Vagina (tissue), 2 donors: ENCODE measurements at regions of chr3 and their contacts with region 1.

Region 1: GRCh38 chr3:46866720-46867549 is 3.7 kb upstream of the MYL3 start:
- DNase-seq: no peak
- H3K4me3 ChIP-seq: no peak overlapping the region
- H3K27ac ChIP-seq: peak overlapping the region; percentile 66
- H3K4me1 ChIP-seq: peaks cover 36% of the 10 kb centered on the region
- H3K27me3 ChIP-seq: no peaks in the 10 kb centered on the region
- CTCF ChIP-seq: peak; percentile 77 to 93 (median 91)
- POLR2A ChIP-seq: no peak

Region 2: DNA sequence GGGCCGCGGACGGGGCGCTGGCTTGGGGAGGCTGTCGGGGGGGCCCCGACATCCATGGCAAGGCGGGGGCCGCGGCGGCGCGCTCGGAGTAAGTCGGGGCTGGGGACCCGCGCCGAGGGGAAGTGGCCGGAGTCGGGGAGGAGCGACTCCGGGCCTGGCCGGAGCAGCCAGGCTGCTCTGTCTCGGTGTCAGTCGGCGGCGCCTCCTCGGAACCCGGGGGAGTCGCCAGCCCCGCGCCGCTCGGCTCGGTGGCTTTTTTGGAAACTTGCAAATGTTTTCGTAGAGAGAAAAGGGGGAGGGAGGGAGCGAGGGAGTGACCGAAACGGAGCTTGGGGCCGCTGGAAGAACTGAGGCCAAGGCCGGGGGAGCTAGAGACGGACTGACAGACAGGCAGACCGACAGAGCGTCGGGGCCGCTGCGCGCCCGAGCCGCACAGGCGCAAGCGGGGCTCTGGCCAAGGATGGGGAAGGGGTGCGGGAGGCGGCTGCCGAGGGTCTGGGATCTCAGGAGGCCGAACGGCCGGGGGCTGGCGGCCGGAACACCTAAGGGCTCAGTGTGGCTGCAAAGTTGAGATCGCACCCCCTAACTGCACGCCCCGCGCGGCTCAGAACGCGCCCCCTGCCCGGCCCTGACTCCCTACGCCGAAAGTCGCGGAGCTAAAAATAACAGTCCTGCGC is 15.6 kb after region 1 on chr3:
- intact Hi-C with region 1: loop called (anchors 2 kb)
- DNase-seq: no peak
- H3K4me3 ChIP-seq: peak overlapping the region; percentile 62 to 71
- H3K27ac ChIP-seq: peak overlapping the region; percentile 89
- H3K4me1 ChIP-seq: peaks cover 58% of the 10 kb centered on the region
- H3K27me3 ChIP-seq: no peaks in the 10 kb centered on the region
- CTCF ChIP-seq: no peak
- POLR2A ChIP-seq: peak in 1 of 2 donors; percentile 27

Region 3: DNA sequence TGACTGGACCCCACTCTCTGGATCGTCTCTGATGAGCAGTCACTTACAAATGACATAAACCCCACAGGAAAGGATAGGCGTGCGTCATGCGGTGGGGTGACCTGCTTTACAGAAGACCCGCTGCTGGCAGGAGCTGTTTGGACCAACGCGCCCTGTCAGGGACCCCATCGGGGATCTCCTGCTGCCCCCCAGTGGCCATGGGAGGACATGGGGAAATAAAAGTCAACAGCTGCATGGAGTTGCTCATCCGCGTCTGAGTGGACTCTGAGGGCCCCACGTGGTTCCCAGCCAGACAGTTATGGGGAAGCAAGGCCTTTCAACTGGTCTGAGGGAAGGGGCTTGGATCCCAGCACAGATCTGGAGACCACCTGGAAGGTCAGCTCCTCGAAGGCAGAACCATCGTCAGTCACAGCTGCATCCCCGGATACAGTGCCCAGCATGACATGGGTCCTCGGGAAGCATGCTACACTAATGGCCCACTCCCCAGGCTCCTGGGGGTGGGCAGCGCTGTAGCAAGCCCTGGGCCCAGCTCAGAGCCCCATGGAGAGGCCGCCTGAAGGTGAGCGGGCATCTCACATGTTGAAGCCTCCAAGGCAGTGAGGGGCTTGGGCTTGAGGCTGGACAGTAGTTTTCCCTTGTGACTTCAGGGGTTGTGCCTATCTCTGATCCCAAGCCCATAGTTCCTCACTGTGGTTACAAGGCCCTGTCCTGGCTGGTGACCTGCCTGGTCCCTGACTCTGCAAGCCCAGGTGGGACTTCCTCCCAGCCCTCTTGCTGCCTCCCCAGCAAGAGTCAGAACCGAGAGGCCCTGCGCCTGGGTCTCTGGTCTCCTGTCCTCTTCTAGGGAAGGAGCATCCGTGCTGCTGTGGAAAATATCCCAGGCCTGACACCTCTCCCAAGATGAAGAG is 42.9 kb after region 1 on chr3:
- intact Hi-C with region 1: loop called (anchors 5 kb)
- DNase-seq: no peak
- H3K4me3 ChIP-seq: no peak overlapping the region
- H3K27ac ChIP-seq: no peak overlapping the region
- H3K4me1 ChIP-seq: peaks cover 32% of the 10 kb centered on the region
- H3K27me3 ChIP-seq: no peaks in the 10 kb centered on the region
- CTCF ChIP-seq: peak; percentile 67 to 88 (median 80)
- POLR2A ChIP-seq: no peak

Region 4: DNA sequence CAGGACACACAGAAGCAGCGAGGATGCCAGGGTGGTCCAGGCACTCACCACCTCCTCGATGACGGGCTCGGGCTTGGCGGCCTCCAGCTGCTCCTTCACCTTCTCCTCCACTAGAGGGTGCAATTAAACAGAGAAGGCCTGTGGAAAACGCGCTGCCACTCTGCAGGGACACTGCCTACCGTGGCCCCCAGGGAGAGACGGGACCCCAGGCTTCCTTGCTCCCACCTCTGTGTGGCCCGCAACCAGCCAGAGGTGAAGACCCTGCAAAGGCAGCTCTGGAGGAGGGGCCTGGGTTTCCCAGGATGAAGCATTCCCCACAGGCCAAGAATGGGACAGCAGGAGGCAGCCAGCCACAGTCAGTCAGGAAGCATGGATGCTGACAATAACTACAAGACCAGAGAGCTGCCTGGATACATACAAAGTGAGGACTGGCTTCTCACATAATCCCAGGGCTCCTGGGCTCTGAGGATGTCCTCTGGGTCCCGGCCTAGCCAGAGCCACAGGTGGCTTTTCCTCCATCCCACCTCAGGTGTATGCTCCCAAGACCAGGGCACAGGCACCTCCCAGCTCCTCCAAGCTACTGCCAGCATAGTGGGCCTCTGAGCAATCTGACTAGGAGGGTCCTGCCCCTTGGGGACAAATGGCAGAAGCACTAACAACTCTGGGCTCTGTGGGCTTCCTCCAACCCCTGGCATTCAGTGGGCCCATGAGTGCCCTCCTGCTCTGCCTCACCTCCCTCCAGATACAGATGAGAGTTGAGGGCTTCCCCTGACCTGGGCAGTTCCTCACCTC is 56.8 kb after region 1 on chr3:
- intact Hi-C with region 1: no loop called
- DNase-seq: no peak
- H3K4me3 ChIP-seq: no peak overlapping the region
- H3K27ac ChIP-seq: no peak overlapping the region
- H3K4me1 ChIP-seq: peaks cover 55% of the 10 kb centered on the region
- H3K27me3 ChIP-seq: no peaks in the 10 kb centered on the region
- CTCF ChIP-seq: peak in 2 of 3 experiments; percentile 5 to 36
- POLR2A ChIP-seq: no peak

Region 5: DNA sequence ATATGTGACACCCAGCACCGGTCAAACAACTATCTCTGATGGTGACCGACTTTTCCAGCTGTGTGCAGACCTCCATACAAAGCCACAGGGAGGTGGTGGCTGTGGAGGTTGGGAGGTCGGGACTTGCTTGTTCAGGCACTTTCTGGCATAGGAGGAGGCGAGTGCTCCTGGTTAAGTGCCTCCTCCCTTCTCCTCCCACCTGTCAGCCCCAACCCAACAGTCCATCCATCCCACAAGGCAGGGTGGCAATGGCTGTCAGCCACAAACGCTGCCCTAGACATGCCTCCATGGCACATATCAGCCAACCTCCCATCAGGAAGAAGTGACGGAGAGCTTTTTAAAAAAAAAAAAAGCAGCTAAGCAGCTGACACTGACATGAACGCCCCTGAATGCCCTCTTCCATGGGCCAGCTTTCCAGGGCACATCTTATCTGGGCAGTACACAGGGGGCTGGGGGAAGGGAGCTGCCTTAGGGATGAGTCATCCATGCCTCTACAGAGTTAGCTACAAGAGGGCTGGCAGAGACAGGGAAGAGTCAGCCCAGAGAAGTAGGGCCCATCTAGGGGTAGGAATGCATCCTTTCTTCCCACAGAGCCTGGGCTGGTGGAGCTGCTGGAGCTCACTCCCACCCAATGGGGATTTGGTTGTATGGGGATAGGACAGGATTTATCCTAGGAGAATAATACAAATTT is 68.4 kb after region 1 on chr3:
- intact Hi-C with region 1: no loop called
- DNase-seq: no peak
- H3K4me3 ChIP-seq: no peak overlapping the region
- H3K27ac ChIP-seq: peak overlapping the region; percentile 73
- H3K4me1 ChIP-seq: peaks cover 70% of the 10 kb centered on the region
- H3K27me3 ChIP-seq: no peaks in the 10 kb centered on the region
- CTCF ChIP-seq: peak in 1 of 3 experiments; percentile 44
- POLR2A ChIP-seq: no peak

Region 6: GRCh38 chr3:46998121-46998851 is 131.4 kb after region 1 on chr3:
- intact Hi-C with region 1: no loop called
- DNase-seq: no peak
- H3K4me3 ChIP-seq: no peak overlapping the region
- H3K27ac ChIP-seq: no peak overlapping the region
- H3K4me1 ChIP-seq: peaks cover 10% of the 10 kb centered on the region
- H3K27me3 ChIP-seq: no peaks in the 10 kb centered on the region
- CTCF ChIP-seq: peak; percentile 53 to 78 (median 54)
- POLR2A ChIP-seq: no peak